ENCODE measurements at regions of chr11 and their contacts with region 1.

Region 1: DNA sequence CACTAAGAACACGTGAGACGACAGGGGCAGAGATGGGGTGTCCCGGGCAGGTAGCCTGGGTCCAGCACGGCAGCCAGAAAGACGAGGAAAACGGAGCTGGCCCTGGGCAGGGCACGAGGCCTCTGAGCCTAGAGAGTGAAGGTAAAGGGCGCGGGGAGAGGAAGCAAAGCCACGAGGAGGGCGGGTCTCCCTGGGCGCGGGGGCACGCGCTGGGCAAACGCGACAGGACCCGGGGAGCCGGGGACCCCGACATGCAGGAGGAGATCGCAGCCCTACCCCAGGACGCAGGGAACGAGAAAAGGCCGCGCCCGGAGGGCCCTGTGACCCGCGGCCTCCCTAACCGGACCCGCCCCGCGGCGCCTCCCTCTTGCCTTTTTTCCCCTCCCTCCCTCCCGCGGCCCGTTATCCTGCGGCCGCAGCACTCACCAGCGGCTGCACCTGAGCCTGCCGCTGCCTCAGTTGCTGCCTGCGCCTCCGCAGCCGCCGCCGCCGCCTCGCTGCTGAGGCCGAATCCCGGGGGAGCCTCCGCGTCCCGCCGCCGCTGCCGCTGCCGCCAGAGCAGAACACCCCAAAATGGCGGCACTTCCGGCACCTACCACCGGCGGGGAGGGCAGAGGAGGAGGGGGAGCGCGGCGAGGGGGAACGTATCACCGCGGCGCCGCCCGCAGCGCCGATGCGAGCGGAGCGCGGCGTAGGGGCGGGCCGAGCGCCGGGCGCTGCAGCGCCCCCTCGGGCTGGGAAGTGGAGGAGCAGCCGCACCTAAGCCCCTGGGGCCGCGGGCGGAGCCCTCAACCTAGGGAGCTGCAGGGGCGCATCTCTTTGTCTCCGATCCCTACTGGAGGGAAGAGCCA is at the start of gene CELF1:
- DNase-seq: peak; percentile 94
- H3K4me3 Mint-ChIP-seq: peak within 1 kb of the TSS; percentile 96
- H3K27ac Mint-ChIP-seq: peak within 1 kb of the TSS; percentile 89
- H3K4me1 Mint-ChIP-seq: peaks cover 41% of the 10 kb centered on the region
- H3K27me3 Mint-ChIP-seq: no peaks in the 10 kb centered on the region
- total RNA-seq, gene CELF1: 104 to 105 TPM

Region 2: DNA sequence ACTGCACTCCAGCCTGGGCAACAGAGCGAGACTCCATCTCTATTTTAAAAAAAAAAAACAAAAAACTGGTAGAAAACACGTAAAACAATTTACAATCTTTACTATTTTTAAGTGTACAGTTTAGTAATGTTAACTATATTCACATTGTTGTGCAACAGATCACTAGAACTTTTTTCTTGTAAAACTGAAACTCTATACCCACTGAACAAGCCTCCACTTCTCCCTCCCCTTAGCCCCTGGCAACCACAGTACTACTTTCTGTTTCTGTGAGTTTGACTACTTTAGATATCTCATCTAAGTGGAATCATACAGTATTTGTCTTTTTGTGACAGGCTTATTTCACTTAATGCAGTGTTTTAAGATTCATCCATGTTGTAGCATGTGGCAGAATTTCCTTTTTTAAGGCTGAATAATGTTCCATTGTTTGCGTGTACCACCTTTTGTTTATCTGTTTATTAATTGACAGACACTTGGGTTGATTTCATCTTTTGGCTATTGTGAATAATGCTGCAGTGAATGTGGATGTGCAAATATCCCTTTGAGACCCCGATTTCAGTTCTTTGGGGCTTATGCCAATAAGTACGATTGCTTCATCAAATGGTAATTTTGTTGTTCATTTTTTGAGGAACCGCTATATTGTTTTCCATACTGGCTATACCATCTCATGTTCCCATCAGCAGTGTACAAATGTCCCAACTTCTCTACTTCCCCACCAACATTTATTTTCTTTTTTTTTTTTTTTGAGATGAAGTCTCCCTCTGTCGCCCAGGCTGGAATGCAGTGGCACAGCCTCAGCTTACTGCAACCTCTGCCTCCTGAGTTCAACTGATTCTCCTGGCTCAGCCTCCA is 327.0 kb before region 1 on chr11:
- CTCF ChIA-PET with region 1: no interaction called
- POLR2A ChIA-PET with region 1: no interaction called
- DNase-seq: peak; percentile 37
- H3K4me3 Mint-ChIP-seq: no peak overlapping the region
- H3K27ac Mint-ChIP-seq: peak overlapping the region; percentile 66
- H3K4me1 Mint-ChIP-seq: peaks cover 37% of the 10 kb centered on the region
- H3K27me3 Mint-ChIP-seq: no peaks in the 10 kb centered on the region

Region 3: DNA sequence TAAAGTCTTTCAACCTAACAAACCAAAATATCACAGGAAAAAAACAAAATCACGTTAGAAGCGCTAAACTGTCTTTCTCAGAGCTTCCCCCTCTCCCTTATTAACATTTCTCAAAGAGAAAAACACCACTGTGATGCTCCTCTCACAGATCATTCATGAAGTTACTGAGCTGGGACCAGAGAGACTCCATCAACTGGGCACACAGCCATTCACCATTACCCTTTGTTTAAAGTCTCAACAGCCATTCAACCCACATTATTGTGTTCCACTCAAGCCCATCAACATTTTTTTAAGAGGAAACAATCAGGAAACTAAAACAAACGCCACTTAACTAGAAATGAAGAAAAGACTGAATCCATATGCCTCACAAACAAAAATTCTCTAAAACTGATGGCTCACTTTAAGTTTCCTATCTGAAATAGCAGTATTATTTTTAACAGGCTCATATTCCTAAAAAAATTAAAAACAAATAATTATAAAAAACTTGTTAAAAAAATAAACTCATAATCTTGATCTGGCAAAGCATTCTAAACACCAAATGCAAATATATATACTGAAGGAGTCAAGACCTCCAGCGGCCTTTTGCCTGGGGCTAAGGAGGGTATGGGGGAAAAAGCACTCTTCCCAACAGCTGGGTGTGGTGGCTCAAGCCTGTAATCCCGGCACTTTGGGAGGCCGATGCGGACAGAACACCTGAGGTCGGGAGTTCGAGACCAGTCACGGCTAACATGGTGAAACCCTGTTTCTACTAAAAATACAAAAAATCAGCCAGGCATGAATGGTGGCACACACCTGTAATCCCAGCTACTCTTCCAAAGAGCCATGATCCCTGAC is 13.8 kb before region 1 on chr11:
- CTCF ChIA-PET with region 1: interaction called, 17 read pairs
- POLR2A ChIA-PET with region 1: interaction called, 33 read pairs
- DNase-seq: no peak
- H3K4me3 Mint-ChIP-seq: no peak overlapping the region
- H3K27ac Mint-ChIP-seq: peak overlapping the region; percentile 16
- H3K4me1 Mint-ChIP-seq: peaks cover 47% of the 10 kb centered on the region
- H3K27me3 Mint-ChIP-seq: no peaks in the 10 kb centered on the region

Region 4: DNA sequence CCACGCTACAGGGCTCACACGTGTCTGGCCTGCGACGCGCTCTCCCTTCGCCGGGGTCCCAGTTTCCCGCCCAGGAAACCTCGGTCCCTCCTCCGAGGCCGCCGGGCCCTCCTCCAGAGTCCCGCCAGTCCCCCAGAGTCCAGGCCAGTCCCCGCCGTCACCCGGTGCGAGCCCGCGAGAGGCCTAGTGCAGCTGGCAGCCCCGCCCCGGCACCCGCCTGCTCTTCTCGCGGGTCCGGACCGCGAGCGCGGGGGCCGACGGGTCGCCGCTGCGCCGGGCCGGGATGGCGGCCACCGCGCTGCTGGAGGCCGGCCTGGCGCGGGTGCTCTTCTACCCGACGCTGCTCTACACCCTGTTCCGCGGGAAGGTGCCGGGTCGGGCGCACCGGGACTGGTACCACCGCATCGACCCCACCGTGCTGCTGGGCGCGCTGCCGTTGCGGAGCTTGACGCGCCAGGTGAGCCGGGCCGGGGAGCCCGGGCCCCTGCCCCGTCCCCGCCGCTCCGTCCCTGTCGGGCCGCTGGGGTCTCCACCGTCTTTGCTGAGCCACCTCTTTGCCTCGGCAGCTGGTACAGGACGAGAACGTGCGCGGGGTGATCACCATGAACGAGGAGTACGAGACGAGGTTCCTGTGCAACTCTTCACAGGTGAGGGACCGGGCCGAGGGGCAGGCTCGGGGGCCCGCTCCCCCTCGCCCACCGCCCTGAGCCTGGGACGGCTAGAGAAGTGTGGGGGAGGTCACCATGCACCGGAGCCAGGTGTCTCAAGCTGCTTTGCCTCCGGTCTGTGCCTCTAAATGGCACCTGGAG is 12.8 kb after region 1 on chr11 and contains the start of gene PTPMT1:
- CTCF ChIA-PET with region 1: interaction called, 12 read pairs
- POLR2A ChIA-PET with region 1: interaction called, 55 read pairs
- DNase-seq: peak; percentile 72
- H3K4me3 Mint-ChIP-seq: peak within 1 kb of the TSS; percentile 79
- H3K27ac Mint-ChIP-seq: peak within 1 kb of the TSS; percentile 65
- H3K4me1 Mint-ChIP-seq: peaks cover 25% of the 10 kb centered on the region
- H3K27me3 Mint-ChIP-seq: no peaks in the 10 kb centered on the region
- total RNA-seq, gene PTPMT1: 42.3 to 45.2 TPM

Region 5: DNA sequence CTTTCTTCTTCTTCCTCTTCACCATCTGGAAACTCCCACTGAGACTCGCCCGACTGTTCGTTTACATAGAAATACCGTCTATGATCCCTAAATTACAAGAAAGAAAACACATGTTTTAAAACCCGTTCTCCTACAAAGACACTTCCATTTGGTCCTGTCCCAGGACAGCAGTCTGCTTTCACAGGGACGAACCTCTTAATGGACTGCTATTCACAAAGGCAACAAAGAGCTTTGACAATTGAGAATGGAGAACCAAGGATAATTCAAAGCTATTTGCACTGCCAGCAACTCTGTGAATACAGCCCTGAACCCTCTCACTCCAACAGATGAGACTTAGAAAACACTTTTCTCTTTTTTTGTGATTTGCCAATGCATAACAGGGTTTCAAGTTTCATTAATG is 178.7 kb after region 1 on chr11:
- CTCF ChIA-PET with region 1: no interaction called
- POLR2A ChIA-PET with region 1: no interaction called
- DNase-seq: no peak
- H3K4me3 Mint-ChIP-seq: no peak overlapping the region
- H3K27ac Mint-ChIP-seq: no peak overlapping the region
- H3K4me1 Mint-ChIP-seq: peaks cover 3% of the 10 kb centered on the region
- H3K27me3 Mint-ChIP-seq: no peaks in the 10 kb centered on the region

Region 6: GRCh38 chr11:47773882-47774281 is 221.1 kb after region 1 on chr11:
- CTCF ChIA-PET with region 1: no interaction called
- POLR2A ChIA-PET with region 1: no interaction called
- DNase-seq: no peak
- H3K4me3 Mint-ChIP-seq: no peak overlapping the region
- H3K27ac Mint-ChIP-seq: no peak overlapping the region
- H3K4me1 Mint-ChIP-seq: peaks cover 7% of the 10 kb centered on the region
- H3K27me3 Mint-ChIP-seq: no peaks in the 10 kb centered on the region

Measured in activated CD4-positive, alpha-beta memory T cell treated with anti-CD3 and anti-CD28 coated beads, Interleukin-2, amount 10 ng/mL, durations not matched to agents 7 days and 5 days (primary cell).